HepG2 (cell line): ENCODE measurements at regions of chr19 and their contacts with region 1.

Region 1: DNA sequence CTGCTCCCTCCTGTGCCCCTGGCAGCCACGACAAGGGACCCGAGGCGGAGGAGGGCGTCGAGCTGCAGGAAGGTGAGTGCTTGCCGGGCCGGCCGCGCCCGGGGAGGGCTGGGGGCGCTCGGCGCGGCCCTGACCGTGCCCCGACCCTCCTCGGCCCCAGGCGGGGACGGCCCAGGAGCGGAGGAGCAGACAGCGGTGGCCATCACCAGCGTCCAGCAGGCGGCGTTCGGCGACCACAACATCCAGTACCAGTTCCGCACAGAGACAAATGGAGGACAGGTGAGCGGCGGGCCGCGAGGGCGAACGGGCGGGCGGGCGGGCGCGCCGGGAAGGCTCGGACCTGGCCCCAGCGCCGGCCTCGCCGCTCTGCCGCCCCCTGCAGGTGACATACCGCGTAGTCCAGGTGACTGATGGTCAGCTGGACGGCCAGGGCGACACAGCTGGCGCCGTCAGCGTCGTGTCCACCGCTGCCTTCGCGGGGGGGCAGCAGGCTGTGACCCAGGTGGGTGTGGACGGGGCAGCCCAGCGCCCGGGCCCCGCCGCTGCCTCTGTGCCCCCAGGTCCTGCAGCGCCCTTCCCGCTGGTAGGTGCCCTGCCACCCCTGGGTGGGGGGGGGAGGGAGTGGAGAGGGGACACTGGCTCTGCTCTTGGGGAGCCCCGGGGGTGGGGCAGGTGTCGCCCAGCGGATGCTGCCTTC is 807 bp downstream of the USF2 start:
- DNase-seq: peak; percentile 82
- ATAC-seq: peak; percentile 79
- H3K4me3 ChIP-seq: peak overlapping the region; percentile 58 to 79 (median 60); a peak in 5 of 6 replicates
- H3K27ac ChIP-seq: peak overlapping the region; percentile 92
- H3K4me1 ChIP-seq: peaks cover 20% of the 10 kb centered on the region
- H3K27me3 ChIP-seq: no peaks in the 10 kb centered on the region
- CTCF ChIP-seq: peak; percentile 86
- EP300 ChIP-seq: no peak
- POLR2A ChIP-seq: peak in 1 of 2 experiments; percentile 26; a peak in 1 of 4 replicates
- RAD21 ChIP-seq: peak; percentile 74

Region 2: GRCh38 chr19:35253316-35254286 is 16.0 kb before region 1 on chr19:
- CTCF ChIA-PET with region 1: interaction called, 3 read pairs
- POLR2A ChIA-PET with region 1: interaction called, 19 read pairs
- in situ Hi-C with region 1: no loop called
- intact Hi-C with region 1: loop called (anchors 1 kb)
- DNase-seq: peak; percentile 79
- ATAC-seq: peak; percentile 69
- H3K4me3 ChIP-seq: peak overlapping the region in 1 of 3 experiments; percentile 18; a peak in 1 of 6 replicates
- H3K27ac ChIP-seq: peak overlapping the region; percentile 63
- H3K4me1 ChIP-seq: peaks cover 57% of the 10 kb centered on the region
- H3K27me3 ChIP-seq: no peaks in the 10 kb centered on the region; a peak in 1 of 5 replicates
- CTCF ChIP-seq: no peak
- EP300 ChIP-seq: peak in 1 of 2 experiments; percentile 52; a peak in 2 of 4 replicates
- POLR2A ChIP-seq: no peak
- RAD21 ChIP-seq: no peak

Region 3: DNA sequence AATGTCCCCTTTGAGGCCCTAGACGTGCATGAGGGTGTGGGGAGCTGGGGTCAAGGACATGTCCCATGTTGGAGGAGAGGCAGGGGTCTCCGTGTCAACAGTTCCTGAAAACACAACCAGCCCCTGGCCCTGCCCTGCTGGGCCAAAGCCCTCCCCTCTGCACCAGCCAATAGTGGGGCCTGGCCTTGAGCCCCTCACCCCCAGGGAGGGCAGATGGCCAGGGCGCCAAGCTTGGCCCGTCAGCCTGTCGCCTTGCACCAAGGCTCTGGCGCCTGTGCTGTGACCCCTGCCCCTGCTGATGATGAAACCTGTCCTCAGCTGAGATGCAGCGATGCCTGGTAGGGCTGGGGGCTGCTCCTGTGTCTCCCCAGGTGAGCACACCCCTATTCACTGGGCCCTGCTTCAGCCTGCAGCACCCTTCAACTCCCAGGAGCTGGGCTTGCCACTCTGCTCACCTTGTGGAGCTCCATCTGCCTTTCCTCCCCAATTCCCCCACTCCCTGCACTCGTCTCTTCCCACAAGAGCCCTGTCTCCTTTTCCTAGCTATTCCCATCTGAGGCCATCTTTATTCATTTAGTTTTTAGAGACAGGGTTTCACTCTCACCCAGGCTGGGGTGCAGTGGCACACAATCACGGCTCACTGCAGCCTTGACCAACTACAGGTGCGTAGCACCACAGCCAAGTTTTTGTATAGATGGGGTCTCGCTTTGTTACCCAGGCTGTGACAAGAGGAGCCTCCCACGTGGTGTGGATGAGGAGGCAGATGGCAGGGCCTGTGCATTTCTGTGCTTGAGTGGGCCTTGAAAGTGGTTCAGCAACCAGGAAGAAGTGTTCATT is 10.6 kb after region 1 on chr19:
- CTCF ChIA-PET with region 1: no interaction called
- POLR2A ChIA-PET with region 1: interaction called, 10 read pairs
- in situ Hi-C with region 1: no loop called
- intact Hi-C with region 1: no loop called
- DNase-seq: peak; percentile 91
- ATAC-seq: peak; percentile 80
- H3K4me3 ChIP-seq: no peak overlapping the region; a peak in 1 of 6 replicates
- H3K27ac ChIP-seq: peak overlapping the region; percentile 77
- H3K4me1 ChIP-seq: peaks cover 61% of the 10 kb centered on the region
- H3K27me3 ChIP-seq: no peaks in the 10 kb centered on the region
- CTCF ChIP-seq: no peak
- EP300 ChIP-seq: peak; percentile 77 to 84; a peak in 2 of 4 replicates
- POLR2A ChIP-seq: peak; percentile 21 to 43; a peak in 3 of 4 replicates
- RAD21 ChIP-seq: peak; percentile 69

Region 4: GRCh38 chr19:35295792-35296462 is 26.4 kb after region 1 on chr19:
- CTCF ChIA-PET with region 1: no interaction called
- POLR2A ChIA-PET with region 1: no interaction called
- in situ Hi-C with region 1: no loop called
- intact Hi-C with region 1: no loop called
- DNase-seq: no peak
- ATAC-seq: peak; percentile 45
- H3K4me3 ChIP-seq: peak overlapping the region in 1 of 3 experiments; percentile 26; a peak in 1 of 6 replicates
- H3K27ac ChIP-seq: no peak overlapping the region
- H3K4me1 ChIP-seq: peaks cover 47% of the 10 kb centered on the region
- H3K27me3 ChIP-seq: peaks cover 6 to 39% of the 10 kb centered on the region in 2 experiments
- CTCF ChIP-seq: no peak
- EP300 ChIP-seq: no peak
- POLR2A ChIP-seq: no peak
- RAD21 ChIP-seq: no peak

Region 5: DNA sequence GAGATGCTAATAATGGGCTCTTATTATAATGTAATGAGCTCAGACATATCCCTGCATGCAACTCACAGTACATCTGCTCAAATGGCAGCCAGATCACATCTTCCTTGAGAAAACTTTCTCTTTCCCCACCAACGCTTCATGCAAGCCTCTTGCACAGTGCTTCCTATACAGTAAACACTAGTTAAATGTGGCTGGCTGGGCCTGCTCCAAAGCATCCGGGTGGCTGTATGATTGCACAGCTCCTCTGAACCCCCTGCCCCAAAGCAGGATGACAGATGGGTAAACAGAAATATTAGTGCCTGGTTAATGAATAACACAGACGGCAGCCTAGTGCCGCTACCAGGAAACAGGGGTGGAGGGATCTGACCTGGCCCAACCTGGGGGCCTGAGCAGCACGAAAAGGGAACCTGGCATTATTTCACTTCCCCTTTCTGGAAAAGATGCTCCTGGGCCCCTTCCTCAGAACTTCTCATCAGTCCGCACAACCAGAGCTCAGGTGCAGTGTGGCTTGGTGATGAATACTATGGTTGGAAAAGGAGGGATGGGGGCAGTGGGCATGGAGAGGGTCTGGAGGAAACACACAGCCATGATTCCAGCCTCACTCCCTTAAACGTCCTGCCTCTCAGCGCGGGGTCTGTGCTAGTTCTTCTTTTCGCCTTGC is 189.3 kb after region 1 on chr19:
- CTCF ChIA-PET with region 1: no interaction called
- POLR2A ChIA-PET with region 1: no interaction called
- in situ Hi-C with region 1: no loop called
- intact Hi-C with region 1: loop called (anchors 5 kb)
- DNase-seq: peak; percentile 92
- ATAC-seq: peak; percentile 95
- H3K4me3 ChIP-seq: peak overlapping the region; percentile 35 to 66 (median 60); a peak in 5 of 6 replicates
- H3K27ac ChIP-seq: peak overlapping the region; percentile 87
- H3K4me1 ChIP-seq: peaks cover 81% of the 10 kb centered on the region
- H3K27me3 ChIP-seq: no peaks in the 10 kb centered on the region; a peak in 1 of 5 replicates
- CTCF ChIP-seq: no peak
- EP300 ChIP-seq: peak in 1 of 2 experiments; percentile 78; a peak in 2 of 4 replicates
- POLR2A ChIP-seq: peak; percentile 15 to 51; a peak in 2 of 4 replicates
- RAD21 ChIP-seq: no peak